PC-3 (cell line): ENCODE measurements at regions of chr3 and their contacts with region 1.

Region 1: GRCh38 chr3:28328188-28329151 is 20.1 kb upstream of the ZCWPW2 start:
- DNase-seq: peak; percentile 75
- ATAC-seq: peak; percentile 33; the same call in 1 of the 2 replicates
- H3K4me3 ChIP-seq: no peak overlapping the region
- H3K27ac ChIP-seq: no peak overlapping the region
- H3K4me1 ChIP-seq: no peaks in the 10 kb centered on the region
- H3K27me3 ChIP-seq: no peaks in the 10 kb centered on the region
- CTCF ChIP-seq: peak; percentile 82

Region 2: DNA sequence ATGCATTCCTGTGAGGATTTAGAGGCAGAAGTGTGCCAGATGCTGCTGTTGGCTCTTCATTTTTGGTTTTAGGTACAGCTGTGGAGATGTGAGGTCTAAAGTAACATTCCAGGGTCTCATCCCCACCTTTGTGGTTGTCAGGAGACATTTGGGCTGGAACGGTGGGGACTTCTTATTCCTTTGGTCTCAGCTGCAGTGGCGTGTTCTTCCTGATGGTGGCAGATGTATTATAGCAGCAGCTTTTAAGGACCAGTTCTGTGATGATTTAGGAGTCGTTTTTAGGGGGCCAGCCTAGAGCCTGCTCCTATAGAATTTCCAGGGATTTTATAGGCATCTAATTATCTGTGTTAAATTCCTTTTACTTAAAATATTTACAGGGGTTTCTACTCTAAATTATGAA is 385.4 kb before region 1 on chr3:
- CTCF ChIA-PET with region 1: no interaction called
- POLR2A ChIA-PET with region 1: no interaction called
- intact Hi-C with region 1: loop called (anchors 5 kb)
- DNase-seq: peak; percentile 55
- ATAC-seq: peak; percentile 67
- H3K4me3 ChIP-seq: no peak overlapping the region
- H3K27ac ChIP-seq: no peak overlapping the region
- H3K4me1 ChIP-seq: no peaks in the 10 kb centered on the region
- H3K27me3 ChIP-seq: no peaks in the 10 kb centered on the region
- CTCF ChIP-seq: peak; percentile 67

Region 3: GRCh38 chr3:28206479-28206878 is 122.0 kb before region 1 on chr3:
- CTCF ChIA-PET with region 1: no interaction called
- POLR2A ChIA-PET with region 1: no interaction called
- intact Hi-C with region 1: no loop called
- DNase-seq: no peak
- ATAC-seq: no peak
- H3K4me3 ChIP-seq: no peak overlapping the region
- H3K27ac ChIP-seq: no peak overlapping the region
- H3K4me1 ChIP-seq: no peaks in the 10 kb centered on the region
- H3K27me3 ChIP-seq: no peaks in the 10 kb centered on the region
- CTCF ChIP-seq: no peak

Region 4: DNA sequence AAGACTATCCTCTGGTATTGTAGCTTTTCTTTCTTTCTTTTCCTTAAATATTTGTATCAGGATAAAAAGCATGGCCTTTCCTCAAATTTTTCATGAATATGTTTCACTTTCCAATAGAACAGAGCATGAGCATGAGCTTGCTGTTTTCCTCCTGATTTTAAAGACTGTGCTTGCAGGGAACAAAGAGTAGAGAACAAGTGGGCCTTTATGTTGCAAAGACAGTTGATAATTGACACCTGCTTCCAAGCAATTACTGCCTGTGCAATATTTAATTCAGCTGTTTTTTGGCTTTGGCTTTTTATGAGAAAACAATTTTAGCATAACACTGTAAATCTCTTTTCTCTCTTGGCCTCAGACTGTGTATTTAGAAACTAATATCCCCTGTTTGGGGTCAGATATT is 283.8 kb after region 1 on chr3:
- CTCF ChIA-PET with region 1: no interaction called
- POLR2A ChIA-PET with region 1: no interaction called
- intact Hi-C with region 1: no loop called
- DNase-seq: no peak
- ATAC-seq: no peak
- H3K4me3 ChIP-seq: no peak overlapping the region
- H3K27ac ChIP-seq: no peak overlapping the region
- H3K4me1 ChIP-seq: no peaks in the 10 kb centered on the region
- H3K27me3 ChIP-seq: peaks cover 15% of the 10 kb centered on the region; the same call in 1 of the 2 replicates
- CTCF ChIP-seq: no peak